ENCODE measurements at regions of chr17 and their contacts with region 1.

Region 1: GRCh38 chr17:10327640-10328039 is 45.2 kb downstream of the MYH13 start:
- DNase-seq: peak; percentile 75 to 90
- H3K4me3 ChIP-seq: no peak overlapping the region
- H3K27ac ChIP-seq: no peak overlapping the region
- H3K4me1 ChIP-seq: no peaks in the 10 kb centered on the region
- H3K27me3 ChIP-seq: no peaks in the 10 kb centered on the region
- CTCF ChIP-seq: peak in 5 of 7 experiments; percentile 73 to 92 (median 90)
- EP300 ChIP-seq: no peak
- POLR2A ChIP-seq: no peak

Region 2: GRCh38 chr17:10618202-10618635 is 290.6 kb after region 1 on chr17:
- intact Hi-C with region 1: loop called (anchors 10 kb)
- DNase-seq: peak; percentile 65 to 87
- H3K4me3 ChIP-seq: no peak overlapping the region
- H3K27ac ChIP-seq: no peak overlapping the region
- H3K4me1 ChIP-seq: peaks cover 0 to 6% (median 2%) of the 10 kb centered on the region in 4 donors
- H3K27me3 ChIP-seq: no peaks in the 10 kb centered on the region
- CTCF ChIP-seq: peak in 5 of 7 experiments; percentile 56 to 73 (median 65)
- EP300 ChIP-seq: no peak
- POLR2A ChIP-seq: no peak